Adrenal gland (tissue), 19 donors: ENCODE measurements at regions of chr12 and their contacts with region 1.

Region 1: GRCh38 chr12:5083955-5084849 is 40.5 kb downstream of the KCNA5 start:
- DNase-seq: peak in 5 of 7 donors; percentile 14 to 62 (median 39)
- H3K4me3 ChIP-seq: no peak overlapping the region
- H3K27ac ChIP-seq: no peak overlapping the region
- H3K4me1 ChIP-seq: no peaks in the 10 kb centered on the region
- H3K27me3 ChIP-seq: no peaks in the 10 kb centered on the region
- CTCF ChIP-seq: peak; percentile 31 to 89 (median 64)
- POLR2A ChIP-seq: no peak

Region 2: GRCh38 chr12:4700621-4701026 is 383.6 kb before region 1 on chr12:
- intact Hi-C with region 1: no loop called
- DNase-seq: peak in 2 of 7 donors; percentile 2 to 8
- H3K4me3 ChIP-seq: no peak overlapping the region
- H3K27ac ChIP-seq: no peak overlapping the region
- H3K4me1 ChIP-seq: no peaks in the 10 kb centered on the region
- H3K27me3 ChIP-seq: no peaks in the 10 kb centered on the region
- CTCF ChIP-seq: no peak
- POLR2A ChIP-seq: no peak

Region 3: GRCh38 chr12:4849795-4850345 is 234.3 kb before region 1 on chr12:
- intact Hi-C with region 1: loop called (anchors 5 to 10 kb)
- DNase-seq: no peak
- H3K4me3 ChIP-seq: no peak overlapping the region
- H3K27ac ChIP-seq: no peak overlapping the region
- H3K4me1 ChIP-seq: no peaks in the 10 kb centered on the region
- H3K27me3 ChIP-seq: no peaks in the 10 kb centered on the region
- CTCF ChIP-seq: no peak
- POLR2A ChIP-seq: no peak

Region 4: GRCh38 chr12:4857472-4858291 is 226.5 kb before region 1 on chr12:
- intact Hi-C with region 1: loop called (anchors 5 to 10 kb)
- DNase-seq: peak; percentile 61 to 87 (median 75)
- H3K4me3 ChIP-seq: no peak overlapping the region
- H3K27ac ChIP-seq: no peak overlapping the region
- H3K4me1 ChIP-seq: no peaks in the 10 kb centered on the region
- H3K27me3 ChIP-seq: peaks cover 3% of the 10 kb centered on the region
- CTCF ChIP-seq: peak; percentile 66 to 83 (median 73)
- POLR2A ChIP-seq: no peak

Region 5: DNA sequence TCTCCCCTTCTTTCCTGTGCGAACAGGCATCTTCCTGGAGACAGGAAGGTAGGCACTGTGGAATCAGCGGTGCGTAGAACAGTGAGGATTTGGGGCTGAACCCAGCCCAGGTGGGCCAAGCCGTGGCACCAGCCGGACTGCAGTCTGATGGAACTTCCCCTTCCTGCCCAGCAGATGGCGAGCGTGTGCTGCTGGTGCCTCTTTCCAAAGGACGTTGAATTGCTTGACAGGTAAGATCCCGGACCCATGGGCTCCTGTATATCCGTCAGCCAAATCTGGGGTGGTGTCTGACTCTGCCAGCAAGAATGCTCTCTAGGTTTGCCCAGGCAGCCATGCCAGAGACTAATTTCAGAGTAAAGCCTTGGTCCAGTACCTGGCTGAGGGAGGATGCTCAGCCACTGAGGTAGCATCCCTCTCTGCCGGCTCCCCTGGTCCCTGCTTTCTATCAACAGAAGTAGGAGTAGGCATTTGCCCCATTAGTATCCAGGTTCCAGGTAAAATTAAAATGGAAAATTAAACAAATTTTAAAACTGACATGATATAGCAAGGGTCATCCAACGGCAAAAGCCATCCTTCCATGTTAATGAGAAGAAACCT is 61.6 kb before region 1 on chr12:
- intact Hi-C with region 1: loop called (anchors 2 to 10 kb)
- DNase-seq: peak; percentile 18 to 59 (median 28)
- H3K4me3 ChIP-seq: no peak overlapping the region
- H3K27ac ChIP-seq: no peak overlapping the region
- H3K4me1 ChIP-seq: no peaks in the 10 kb centered on the region
- H3K27me3 ChIP-seq: peaks cover 5% of the 10 kb centered on the region
- CTCF ChIP-seq: peak; percentile 50 to 85 (median 78)
- POLR2A ChIP-seq: no peak

Region 6: GRCh38 chr12:5473076-5473782 is 389.0 kb after region 1 on chr12:
- intact Hi-C with region 1: no loop called
- DNase-seq: no peak
- H3K4me3 ChIP-seq: no peak overlapping the region
- H3K27ac ChIP-seq: no peak overlapping the region
- H3K4me1 ChIP-seq: no peaks in the 10 kb centered on the region
- H3K27me3 ChIP-seq: no peaks in the 10 kb centered on the region
- CTCF ChIP-seq: no peak
- POLR2A ChIP-seq: no peak